ENCODE measurements at regions of chr2 and their contacts with region 1.

Region 1: DNA sequence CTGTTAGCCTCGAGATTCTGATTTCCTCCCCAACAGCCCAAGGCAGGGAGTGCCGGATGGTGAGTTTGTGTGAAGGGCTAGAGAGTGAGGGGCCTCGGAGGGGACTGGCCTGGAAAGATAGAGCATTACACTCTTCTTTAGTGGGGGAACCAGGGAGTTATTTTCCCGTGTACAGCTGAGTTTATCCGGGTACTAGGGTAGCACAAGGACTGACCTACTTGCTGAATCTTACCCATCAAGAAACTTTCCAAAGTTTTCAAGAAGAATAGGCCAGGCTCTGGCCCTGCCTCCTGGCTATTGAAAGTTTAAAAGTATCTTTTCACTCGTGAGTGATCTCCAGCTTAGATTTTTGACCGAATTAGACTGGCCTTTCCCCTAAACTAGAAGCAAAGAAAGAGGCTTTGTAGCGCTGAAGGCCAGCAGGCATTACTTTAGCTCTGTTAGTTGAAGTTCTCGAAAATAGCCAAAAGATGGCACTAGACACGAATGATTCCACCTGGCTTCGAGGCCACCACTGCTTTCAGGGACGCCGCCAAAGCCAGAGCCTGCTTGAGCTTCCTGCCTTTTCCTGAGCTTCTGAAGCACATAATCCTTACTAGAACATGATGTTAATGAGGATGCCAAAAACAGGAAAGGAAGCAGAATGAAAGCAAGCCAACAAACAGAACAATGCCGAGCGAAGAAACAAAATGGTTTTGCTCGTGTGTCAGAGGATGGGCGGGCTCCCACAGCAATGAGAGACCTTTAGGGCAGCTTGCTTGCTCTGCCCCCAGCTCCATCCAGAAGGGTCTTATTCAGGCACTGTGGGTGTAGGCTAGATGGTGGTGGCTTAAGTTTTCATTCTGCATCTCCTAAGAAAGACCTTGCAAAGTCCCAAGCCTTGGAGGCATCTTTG is 55.8 kb downstream of the TSN start:
- DNase-seq: peak; percentile 66
- ATAC-seq: peak; percentile 91
- H3K4me3 Mint-ChIP-seq: no peak overlapping the region
- H3K27ac Mint-ChIP-seq: no peak overlapping the region
- H3K4me1 Mint-ChIP-seq: peaks cover 44% of the 10 kb centered on the region
- H3K27me3 Mint-ChIP-seq: peaks cover 11% of the 10 kb centered on the region
- CTCF ChIP-seq: peak; percentile 21; the same call in 1 of the 2 replicates

Region 2: DNA sequence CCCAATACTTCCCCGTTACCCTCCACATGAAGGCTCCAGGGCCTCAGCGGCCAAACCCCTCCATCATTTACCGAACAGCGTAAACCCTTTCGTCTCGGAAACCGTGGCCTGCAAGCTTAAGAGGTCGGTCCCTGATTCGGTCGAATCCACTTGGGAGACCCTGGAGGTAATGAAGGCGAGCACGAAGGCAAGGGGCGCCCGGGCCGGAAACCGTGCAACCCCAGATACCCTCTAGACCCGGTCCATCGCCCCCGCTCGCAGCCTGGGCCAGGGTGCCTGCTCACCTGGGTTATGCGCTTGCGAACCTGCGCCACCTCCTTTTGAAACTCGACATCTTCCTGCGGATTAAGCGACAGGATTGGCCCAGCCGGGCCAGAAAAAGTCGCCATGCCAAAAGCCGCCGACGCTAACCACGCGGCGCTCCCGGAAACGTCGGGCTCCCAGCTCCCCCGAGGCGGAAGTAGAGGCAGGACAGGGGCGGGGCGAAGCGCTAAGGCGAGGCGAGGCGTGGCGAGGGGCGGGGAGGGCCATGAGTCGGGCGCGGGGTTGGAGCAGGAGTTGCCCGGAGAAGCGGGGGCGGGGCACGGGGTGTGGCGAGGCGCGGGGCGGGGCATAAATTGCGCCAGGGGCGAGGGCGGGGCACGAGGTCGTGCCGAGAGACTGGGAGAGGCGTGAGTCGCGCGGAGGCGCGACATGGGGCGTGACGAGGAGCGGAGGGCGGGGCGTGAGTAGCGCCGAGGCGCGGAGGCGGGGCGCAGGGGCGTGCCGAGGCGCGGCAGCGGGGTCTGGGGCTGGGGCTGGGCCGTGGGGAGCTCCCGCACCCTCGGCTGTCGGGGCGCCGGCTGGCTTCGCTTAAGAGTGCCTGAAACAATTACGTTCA is 74.5 kb before region 1 on chr2 and contains the start of gene NIFK:
- CTCF ChIA-PET with region 1: interaction called, 10 read pairs
- POLR2A ChIA-PET with region 1: no interaction called
- DNase-seq: peak; percentile 100
- ATAC-seq: peak; percentile 92
- H3K4me3 Mint-ChIP-seq: peak within 1 kb of the TSS; percentile 98
- H3K27ac Mint-ChIP-seq: peak within 1 kb of the TSS; percentile 90
- H3K4me1 Mint-ChIP-seq: peaks cover 10% of the 10 kb centered on the region
- H3K27me3 Mint-ChIP-seq: no peaks in the 10 kb centered on the region; the same call in 1 of the 2 replicates
- CTCF ChIP-seq: no peak
- total RNA-seq, gene NIFK: 72.4 to 91.3 TPM (median 74.5 TPM) in 3 replicates

Region 3: GRCh38 chr2:121790250-121790956 is 20.8 kb before region 1 on chr2:
- CTCF ChIA-PET with region 1: interaction called, 15 read pairs
- POLR2A ChIA-PET with region 1: no interaction called
- DNase-seq: no peak
- ATAC-seq: peak; percentile 21
- H3K4me3 Mint-ChIP-seq: no peak overlapping the region
- H3K27ac Mint-ChIP-seq: peak overlapping the region; percentile 60
- H3K4me1 Mint-ChIP-seq: peaks cover 41% of the 10 kb centered on the region
- H3K27me3 Mint-ChIP-seq: no peaks in the 10 kb centered on the region; the same call in 1 of the 2 replicates
- CTCF ChIP-seq: no peak

Region 4: GRCh38 chr2:121888200-121888579 is 77.0 kb after region 1 on chr2:
- CTCF ChIA-PET with region 1: interaction called, 15 read pairs
- POLR2A ChIA-PET with region 1: no interaction called
- DNase-seq: peak; percentile 78
- ATAC-seq: peak; percentile 95
- H3K4me3 Mint-ChIP-seq: no peak overlapping the region
- H3K27ac Mint-ChIP-seq: no peak overlapping the region
- H3K4me1 Mint-ChIP-seq: peaks cover 10% of the 10 kb centered on the region
- H3K27me3 Mint-ChIP-seq: peaks cover 21% of the 10 kb centered on the region
- CTCF ChIP-seq: peak; percentile 71

Region 5: GRCh38 chr2:121969166-121969565 is 158.0 kb after region 1 on chr2:
- CTCF ChIA-PET with region 1: interaction called, 15 read pairs
- POLR2A ChIA-PET with region 1: no interaction called
- DNase-seq: no peak
- ATAC-seq: no peak
- H3K4me3 Mint-ChIP-seq: no peak overlapping the region
- H3K27ac Mint-ChIP-seq: no peak overlapping the region
- H3K4me1 Mint-ChIP-seq: peaks cover 26% of the 10 kb centered on the region
- H3K27me3 Mint-ChIP-seq: no peaks in the 10 kb centered on the region
- CTCF ChIP-seq: no peak

Measured in WTC11 (cell line).